Activated CD8-positive, alpha-beta memory T cell treated with anti-CD3 and anti-CD28 coated beads, Interleukin-2, amount 10 ng/mL, durations not matched to agents 7 days and 5 days (primary cell): ENCODE measurements at regions of chr3 and their contacts with region 1.

Region 1: DNA sequence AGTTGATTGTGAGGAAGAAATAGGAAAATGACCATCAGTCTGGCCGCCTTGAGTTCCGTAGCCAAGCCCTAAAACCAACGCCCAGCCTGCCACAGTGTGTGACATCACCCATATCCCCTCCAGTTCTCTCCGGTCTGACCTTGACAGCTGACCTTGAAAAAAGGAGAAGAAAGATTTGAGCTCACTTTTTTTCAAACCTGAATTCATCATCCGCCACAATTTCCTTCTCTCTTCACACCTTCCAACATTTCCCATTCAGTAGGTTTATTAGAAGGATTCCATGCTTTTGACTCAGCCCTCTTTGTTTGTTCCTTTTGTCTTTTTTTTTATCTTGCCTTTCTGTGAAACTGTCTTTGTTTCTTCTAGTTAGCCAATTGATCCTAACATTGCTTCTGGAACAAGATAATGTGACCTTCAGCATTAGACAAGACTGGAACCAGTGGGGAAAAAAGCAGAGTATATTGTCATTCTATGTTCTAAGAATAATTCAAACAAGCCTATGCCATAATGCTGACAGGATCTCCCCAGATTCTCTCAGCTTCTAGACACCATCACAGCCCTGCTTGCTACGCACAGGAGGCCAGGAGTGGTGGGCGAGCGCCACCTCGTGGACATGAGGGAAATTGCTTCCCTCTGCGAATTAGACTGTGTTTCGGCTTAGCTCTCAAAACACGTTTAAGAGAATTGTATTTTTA is 283.1 kb downstream of the FGF12 start:
- DNase-seq: peak; percentile 65
- ATAC-seq: no peak
- H3K4me3 Mint-ChIP-seq: no peak overlapping the region
- H3K27ac Mint-ChIP-seq: no peak overlapping the region
- H3K4me1 Mint-ChIP-seq: no peaks in the 10 kb centered on the region
- H3K27me3 Mint-ChIP-seq: peaks cover 10% of the 10 kb centered on the region

Region 2: GRCh38 chr3:192188218-192188835 is 255.9 kb before region 1 on chr3:
- CTCF ChIA-PET with region 1: interaction called, 27 read pairs
- DNase-seq: peak; percentile 49
- ATAC-seq: no peak
- H3K4me3 Mint-ChIP-seq: no peak overlapping the region
- H3K27ac Mint-ChIP-seq: no peak overlapping the region
- H3K4me1 Mint-ChIP-seq: no peaks in the 10 kb centered on the region
- H3K27me3 Mint-ChIP-seq: no peaks in the 10 kb centered on the region

Region 3: DNA sequence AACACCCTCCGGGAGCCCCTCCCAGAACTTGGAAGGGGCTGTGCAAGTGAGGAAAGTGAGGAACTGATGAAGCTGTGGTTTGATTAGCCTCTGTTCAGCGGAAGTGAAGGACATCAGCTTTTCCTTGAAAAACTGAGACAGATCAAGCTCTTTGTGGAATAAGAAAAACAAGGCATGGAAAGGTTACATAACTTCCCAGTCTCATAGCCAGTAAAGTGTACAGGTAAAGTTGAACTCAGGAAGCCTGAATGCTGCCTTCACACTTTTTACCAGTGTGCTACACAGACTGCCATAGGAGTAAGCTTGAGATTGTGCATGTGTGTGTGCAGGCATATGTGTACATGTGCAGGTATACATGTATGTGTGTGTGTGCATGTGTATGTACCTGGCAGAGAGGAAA is 10.1 kb before region 1 on chr3:
- CTCF ChIA-PET with region 1: interaction called, 18 read pairs
- DNase-seq: no peak
- ATAC-seq: no peak
- H3K4me3 Mint-ChIP-seq: no peak overlapping the region
- H3K27ac Mint-ChIP-seq: no peak overlapping the region
- H3K4me1 Mint-ChIP-seq: no peaks in the 10 kb centered on the region
- H3K27me3 Mint-ChIP-seq: peaks cover 4% of the 10 kb centered on the region